ENCODE measurements at regions of chr14 and their contacts with region 1.

Region 1: GRCh38 chr14:69637503-69638030 is 26.2 kb downstream of the SUSD6 start:
- DNase-seq: no peak
- ATAC-seq: peak; percentile 5
- H3K4me3 Mint-ChIP-seq: peak overlapping the region; percentile 57
- H3K27ac Mint-ChIP-seq: peak overlapping the region; percentile 88
- H3K4me1 Mint-ChIP-seq: peaks cover 64% of the 10 kb centered on the region
- H3K27me3 Mint-ChIP-seq: no peaks in the 10 kb centered on the region

Region 2: GRCh38 chr14:69611201-69612011 is 26.2 kb before region 1 on chr14 and contains the start of gene SUSD6:
- POLR2A ChIA-PET with region 1: interaction called, 13 read pairs
- DNase-seq: peak; percentile 88
- ATAC-seq: peak; percentile 73
- H3K4me3 Mint-ChIP-seq: peak within 1 kb of the TSS; percentile 100
- H3K27ac Mint-ChIP-seq: peak within 1 kb of the TSS; percentile 98
- H3K4me1 Mint-ChIP-seq: peaks cover 54% of the 10 kb centered on the region
- H3K27me3 Mint-ChIP-seq: no peaks in the 10 kb centered on the region
- total RNA-seq, gene SUSD6: 42.9 to 44.5 TPM

Region 3: DNA sequence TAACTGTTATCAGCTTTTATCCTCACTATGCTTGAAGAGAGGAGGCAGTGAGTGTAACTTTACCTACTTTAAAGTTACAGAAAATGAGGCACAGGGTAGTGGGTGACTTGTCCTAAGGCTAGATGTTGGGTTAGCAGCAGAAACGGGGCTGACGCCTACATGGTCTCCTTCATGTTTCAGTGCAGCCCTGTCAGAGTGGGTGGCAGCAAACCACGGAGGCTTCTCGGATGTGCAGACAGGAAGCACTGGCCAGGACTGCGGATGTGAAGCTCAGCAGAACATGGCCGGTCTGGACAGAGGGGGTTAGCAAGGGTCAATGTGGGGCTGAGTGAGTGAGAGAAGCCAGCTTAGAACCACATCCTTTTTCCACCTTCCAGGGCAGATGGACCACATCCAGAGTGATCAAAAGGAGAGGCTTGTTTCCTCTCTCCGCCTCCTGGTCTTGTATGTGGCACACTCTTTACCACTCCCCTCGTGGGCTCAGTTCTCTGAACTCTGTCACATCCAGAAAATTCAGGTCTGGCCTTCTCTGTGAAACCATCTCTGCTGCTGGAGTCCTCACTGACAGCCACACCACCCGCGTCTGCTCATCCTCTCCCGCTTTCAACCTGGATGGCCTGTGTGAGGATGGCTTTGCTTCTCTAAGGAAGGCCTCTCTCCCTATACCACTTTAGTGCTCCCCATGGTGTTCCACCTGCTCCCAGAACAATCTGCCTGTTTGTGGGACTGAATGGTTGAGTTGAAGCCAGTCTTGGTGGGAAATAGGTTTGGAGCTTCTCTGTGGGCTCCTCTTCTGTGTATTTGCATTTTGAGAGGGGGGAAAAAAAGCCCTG is 12.1 kb before region 1 on chr14:
- POLR2A ChIA-PET with region 1: interaction called, 19 read pairs
- DNase-seq: peak; percentile 76
- ATAC-seq: peak; percentile 91
- H3K4me3 Mint-ChIP-seq: peak overlapping the region; percentile 77
- H3K27ac Mint-ChIP-seq: peak overlapping the region; percentile 88
- H3K4me1 Mint-ChIP-seq: peaks cover 73% of the 10 kb centered on the region
- H3K27me3 Mint-ChIP-seq: no peaks in the 10 kb centered on the region

Region 4: DNA sequence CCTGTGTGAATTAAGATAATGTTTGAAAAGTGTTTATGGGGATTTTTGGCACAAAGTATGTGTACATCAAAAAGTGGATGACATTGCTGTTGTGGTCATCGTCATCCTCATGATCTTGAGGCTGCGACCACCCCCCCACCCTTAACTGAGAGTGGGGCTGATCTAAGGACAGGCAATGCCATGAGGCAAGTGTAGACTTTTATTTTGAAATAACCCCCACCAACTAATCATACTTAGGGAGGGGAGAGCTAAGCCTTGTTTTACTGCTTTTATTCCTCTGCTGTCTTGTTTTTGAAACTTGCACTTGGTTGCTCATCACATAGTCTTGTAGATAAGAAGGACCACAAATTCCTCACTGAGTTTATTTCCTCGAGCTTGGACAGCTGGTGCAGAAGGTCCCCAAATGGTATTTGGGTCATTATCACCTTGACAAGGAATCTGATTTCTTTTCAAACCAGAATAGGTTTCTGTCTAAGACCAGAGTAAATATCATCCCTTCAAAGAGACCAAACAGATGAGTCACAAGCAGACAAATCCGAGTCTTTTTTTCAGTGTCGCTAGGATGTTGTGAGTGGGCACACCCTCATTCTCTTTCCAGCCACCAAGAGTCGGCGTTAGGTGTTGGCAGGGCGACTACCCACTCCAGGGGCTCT is 217.7 kb after region 1 on chr14:
- POLR2A ChIA-PET with region 1: no interaction called
- DNase-seq: no peak
- ATAC-seq: no peak
- H3K4me3 Mint-ChIP-seq: no peak overlapping the region
- H3K27ac Mint-ChIP-seq: no peak overlapping the region
- H3K4me1 Mint-ChIP-seq: peaks cover 2% of the 10 kb centered on the region
- H3K27me3 Mint-ChIP-seq: peaks cover 26% of the 10 kb centered on the region

Measured in activated naive CD8-positive, alpha-beta T cell treated with anti-CD3 and anti-CD28 coated beads, Interleukin-2, amount 10 ng/mL, durations not matched to agents 7 days and 5 days (primary cell).